Mammary epithelial cell (primary cell): ENCODE measurements at regions of chr16 and their contacts with region 1.

Region 1: DNA sequence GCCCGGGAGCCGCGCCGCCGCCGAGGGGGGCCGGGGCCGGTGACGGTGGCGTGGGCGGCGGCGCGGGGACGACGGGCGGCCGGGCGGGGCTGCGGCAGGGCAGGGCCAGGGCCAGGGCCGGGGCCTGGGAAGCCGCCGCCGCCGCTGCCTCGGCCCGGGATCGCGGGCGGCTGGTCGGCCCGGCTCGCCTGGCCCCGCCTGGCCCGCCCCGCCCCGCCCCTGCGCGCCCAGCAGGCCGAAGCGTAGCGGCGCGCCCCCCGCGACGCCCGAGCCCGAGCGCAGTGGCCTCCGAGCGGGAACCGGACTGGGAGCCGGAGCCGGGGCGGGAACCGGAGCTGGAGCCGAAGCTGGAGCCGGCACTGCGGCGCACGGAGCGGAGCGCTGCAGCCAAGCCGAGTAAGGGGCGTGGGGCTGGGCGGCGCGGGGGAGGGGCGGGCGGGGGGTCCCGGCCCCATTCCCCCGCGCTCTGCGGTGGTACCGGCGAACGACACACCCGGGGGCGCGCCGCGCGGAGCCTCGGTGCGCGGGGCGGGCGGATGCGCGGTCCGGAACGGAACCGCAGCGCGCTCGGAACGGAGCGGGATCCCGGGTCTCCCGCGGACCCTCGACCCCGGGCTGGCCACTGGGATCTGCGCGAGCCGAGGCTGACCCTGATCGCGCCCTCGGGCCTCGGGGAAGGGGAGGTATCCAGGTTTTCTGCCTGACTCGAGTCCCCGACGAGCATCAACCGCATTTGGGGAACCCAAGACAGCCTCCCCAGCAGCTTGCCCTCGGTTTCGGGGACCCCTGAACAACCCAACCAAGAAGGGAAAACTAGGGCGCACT is at the start of gene BEAN1:
- DNase-seq: no peak
- H3K4me3 ChIP-seq: peak within 1 kb of the TSS; percentile 37 to 47 (median 46)
- H3K27ac ChIP-seq: no peak within 1 kb of the TSS
- H3K4me1 ChIP-seq: peaks cover 10% of the 10 kb centered on the region
- H3K27me3 ChIP-seq: peaks cover 9% of the 10 kb centered on the region
- CTCF ChIP-seq: no peak
- total RNA-seq, gene BEAN1: 1.3 to 1.9 TPM

Region 2: DNA sequence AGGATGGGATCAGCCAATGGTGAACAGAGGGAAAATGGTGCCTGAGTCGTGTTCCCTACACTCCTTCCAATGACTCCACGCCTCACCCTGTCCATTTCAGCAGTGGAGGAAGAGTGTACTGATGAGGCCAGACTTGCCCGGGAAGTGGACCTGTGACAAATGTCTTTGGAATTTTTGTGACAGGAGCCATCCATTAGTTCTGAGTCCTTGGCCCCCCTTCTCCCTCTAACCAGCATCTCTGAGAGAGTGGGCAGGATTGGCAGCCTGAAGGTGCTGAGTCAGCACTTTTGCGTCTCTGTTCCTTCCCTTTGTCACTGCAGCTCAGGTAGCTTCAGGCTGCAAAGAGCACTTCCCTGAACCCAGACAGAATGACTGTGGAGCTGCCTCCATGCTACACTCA is 30.6 kb after region 1 on chr16:
- CTCF ChIA-PET with region 1: no interaction called
- dilution Hi-C with region 1: no loop called
- in situ Hi-C with region 1: no loop called
- intact Hi-C with region 1: loop called (anchors 5 kb)
- DNase-seq: peak; percentile 37
- H3K4me3 ChIP-seq: no peak overlapping the region
- H3K27ac ChIP-seq: no peak overlapping the region
- H3K4me1 ChIP-seq: peaks cover 8% of the 10 kb centered on the region
- H3K27me3 ChIP-seq: no peaks in the 10 kb centered on the region
- CTCF ChIP-seq: no peak

Region 3: DNA sequence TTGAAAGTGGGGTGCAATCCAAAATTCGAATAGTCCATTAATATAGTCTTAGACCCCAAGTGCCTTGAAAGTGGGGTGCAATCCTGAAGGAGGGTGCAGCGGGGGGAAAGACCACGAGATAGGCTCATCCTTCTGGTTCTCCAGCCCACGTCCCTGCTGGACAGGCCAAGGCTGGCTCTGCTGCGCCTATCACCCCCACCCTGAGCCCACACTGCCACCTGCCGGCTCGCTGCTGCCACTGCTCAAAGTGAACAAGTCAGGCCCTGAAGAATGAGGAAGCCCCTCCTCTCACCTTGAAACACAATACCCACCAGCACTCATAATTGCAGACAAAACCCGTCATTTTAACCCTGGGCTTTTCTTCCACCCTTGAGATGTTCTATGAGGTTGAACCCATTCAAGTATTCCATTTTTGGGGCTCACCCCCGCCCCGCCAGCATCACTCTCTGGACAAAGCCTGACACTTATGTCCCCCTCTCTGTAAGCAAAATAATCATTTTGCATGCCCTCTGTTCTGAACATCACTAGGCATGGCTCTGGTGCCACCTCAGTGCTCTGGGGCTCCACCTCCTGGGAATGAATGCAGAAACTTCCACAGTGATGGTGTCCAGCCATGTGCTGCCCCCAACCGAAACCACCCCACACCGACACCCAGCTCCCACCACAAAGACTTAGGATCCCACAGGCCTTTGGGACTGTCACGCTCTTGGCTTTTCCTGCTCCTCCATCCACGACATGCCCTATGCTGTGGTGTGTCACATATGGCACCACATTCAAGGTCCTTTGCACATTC is 56.6 kb after region 1 on chr16:
- CTCF ChIA-PET with region 1: no interaction called
- dilution Hi-C with region 1: no loop called
- in situ Hi-C with region 1: no loop called
- intact Hi-C with region 1: no loop called
- DNase-seq: peak; percentile 51
- H3K4me3 ChIP-seq: no peak overlapping the region
- H3K27ac ChIP-seq: no peak overlapping the region
- H3K4me1 ChIP-seq: peaks cover 38% of the 10 kb centered on the region
- H3K27me3 ChIP-seq: no peaks in the 10 kb centered on the region
- CTCF ChIP-seq: peak; percentile 98 to 99